ENCODE measurements at regions of chr6 and their contacts with region 1.

Region 1: DNA sequence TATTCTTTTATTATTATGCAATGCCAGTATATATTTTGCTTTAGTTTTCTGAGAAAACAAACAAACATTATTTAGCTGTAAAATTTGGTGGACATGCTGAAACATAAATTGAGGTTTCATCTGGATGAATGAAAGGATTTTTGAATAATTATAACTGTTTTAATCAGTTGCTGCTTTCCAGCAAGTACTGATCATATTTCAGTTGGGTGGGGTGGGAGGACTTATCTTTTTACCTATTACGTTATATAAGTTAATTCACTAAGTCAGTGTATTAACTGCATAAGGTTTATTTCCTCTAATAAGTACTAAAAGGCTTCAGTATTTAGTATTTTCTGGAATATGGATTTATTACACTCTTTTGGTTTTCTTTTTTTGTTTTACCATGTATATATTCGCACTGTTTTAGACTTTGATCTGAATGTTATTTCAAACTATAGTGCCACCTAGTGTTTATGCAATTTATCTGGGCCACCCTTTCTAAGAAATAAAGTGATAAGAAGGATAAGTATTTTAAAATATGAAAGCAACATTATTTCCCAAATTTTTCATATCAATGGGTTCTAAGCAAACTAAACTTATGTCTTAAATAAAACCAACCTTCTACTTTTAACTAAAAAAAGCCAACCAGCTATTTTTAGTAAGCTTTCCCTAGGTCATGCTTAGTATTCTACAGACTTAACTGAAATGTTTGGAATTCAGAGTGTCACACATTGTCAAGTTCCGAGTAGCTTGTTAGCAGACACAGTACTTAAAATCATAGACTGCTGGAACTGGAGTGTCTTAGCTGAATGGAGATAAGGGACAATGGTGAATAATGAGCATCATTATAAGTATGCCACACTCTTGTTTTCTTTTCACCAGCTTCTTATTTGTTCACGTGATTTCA is 105.4 kb upstream of the MCHR2 start:
- DNase-seq: no peak
- ATAC-seq: no peak
- H3K4me3 Mint-ChIP-seq: no peak overlapping the region
- H3K27ac Mint-ChIP-seq: no peak overlapping the region
- H3K4me1 Mint-ChIP-seq: no peaks in the 10 kb centered on the region
- H3K27me3 Mint-ChIP-seq: peaks cover 2% of the 10 kb centered on the region

Region 2: GRCh38 chr6:100001915-100002388 is 97.5 kb before region 1 on chr6:
- CTCF ChIA-PET with region 1: interaction called, 22 read pairs
- POLR2A ChIA-PET with region 1: no interaction called
- intact Hi-C with region 1: loop called (anchors 1 kb)
- DNase-seq: peak; percentile 55
- ATAC-seq: peak; percentile 61
- H3K4me3 Mint-ChIP-seq: no peak overlapping the region
- H3K27ac Mint-ChIP-seq: no peak overlapping the region
- H3K4me1 Mint-ChIP-seq: no peaks in the 10 kb centered on the region
- H3K27me3 Mint-ChIP-seq: peaks cover 15% of the 10 kb centered on the region

Measured in activated CD4-positive, alpha-beta T cell treated with anti-CD3 and anti-CD28 coated beads for 36 hours (primary cell).